Calu3 (cell line): ENCODE measurements at regions of chr11 and their contacts with region 1.

Region 1: DNA sequence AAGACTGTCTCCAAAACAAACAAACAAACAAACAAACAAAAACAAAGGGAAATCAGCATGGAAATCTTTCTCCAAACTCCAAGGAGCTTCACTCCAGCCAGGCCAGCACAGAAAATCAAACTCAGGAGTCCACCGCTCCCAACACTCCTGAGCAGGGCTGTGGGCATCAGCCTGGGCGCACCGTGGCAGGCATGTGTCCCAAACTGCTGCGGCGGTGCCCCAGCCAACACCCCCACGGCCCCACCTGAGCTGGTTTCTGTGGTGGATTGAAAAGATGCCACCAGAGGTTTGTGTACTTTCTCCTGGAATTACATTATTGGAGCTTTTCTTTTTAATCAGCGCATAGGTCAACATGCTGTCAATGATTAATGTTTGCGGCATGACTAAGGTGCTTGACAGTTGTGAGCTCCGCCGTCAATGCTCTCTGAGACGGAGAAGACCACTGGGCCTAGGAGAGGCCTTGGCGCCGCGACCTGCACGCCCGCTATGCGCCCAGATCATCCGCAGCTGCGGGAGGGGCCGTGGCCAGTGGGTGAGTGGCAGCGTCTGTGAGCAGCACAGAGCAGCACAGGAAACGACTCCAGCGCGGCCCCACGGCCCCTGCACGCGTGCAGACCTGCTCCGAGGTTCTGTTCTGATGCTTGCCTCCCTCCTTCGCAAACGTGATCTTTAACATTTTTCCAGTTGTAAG is 18.1 kb downstream of the DRD4 start:
- DNase-seq: peak; percentile 61
- H3K4me3 Mint-ChIP-seq: peak overlapping the region; percentile 61
- H3K27ac Mint-ChIP-seq: no peak overlapping the region
- H3K4me1 Mint-ChIP-seq: peaks cover 13% of the 10 kb centered on the region
- H3K27me3 Mint-ChIP-seq: no peaks in the 10 kb centered on the region
- CTCF ChIP-seq: no peak

Region 2: GRCh38 chr11:554824-555472 is 100.2 kb before region 1 on chr11:
- CTCF ChIA-PET with region 1: interaction called, 11 read pairs
- intact Hi-C with region 1: no loop called
- DNase-seq: peak; percentile 81
- H3K4me3 Mint-ChIP-seq: peak overlapping the region; percentile 54
- H3K27ac Mint-ChIP-seq: no peak overlapping the region
- H3K4me1 Mint-ChIP-seq: no peaks in the 10 kb centered on the region
- H3K27me3 Mint-ChIP-seq: no peaks in the 10 kb centered on the region
- CTCF ChIP-seq: peak; percentile 72